ENCODE measurements at regions of chr2 and their contacts with region 1.

Region 1: GRCh38 chr2:85538486-85539360 is at the start of gene MAT2A:
- DNase-seq: peak; percentile 96 to 98 (median 97)
- H3K4me3 ChIP-seq: peak within 1 kb of the TSS; percentile 68
- H3K27ac ChIP-seq: peak within 1 kb of the TSS; percentile 97 to 98
- H3K4me1 ChIP-seq: peaks cover 4% of the 10 kb centered on the region
- H3K27me3 ChIP-seq: no peaks in the 10 kb centered on the region
- CTCF ChIP-seq: peak; percentile 55 to 92 (median 91)
- EP300 ChIP-seq: no peak
- POLR2A ChIP-seq: peak; percentile 99
- total RNA-seq, gene MAT2A: 128 to 766 (median 228) TPM

Region 2: GRCh38 chr2:85420536-85421259 is 118.0 kb before region 1 on chr2:
- intact Hi-C with region 1: loop called in 1 of 4 experiments (anchors 2 kb)
- DNase-seq: peak; percentile 84 to 93 (median 89)
- H3K4me3 ChIP-seq: no peak overlapping the region
- H3K27ac ChIP-seq: peak overlapping the region; percentile 58 to 68
- H3K4me1 ChIP-seq: peaks cover 5% of the 10 kb centered on the region
- H3K27me3 ChIP-seq: no peaks in the 10 kb centered on the region
- CTCF ChIP-seq: peak; percentile 100
- EP300 ChIP-seq: no peak
- POLR2A ChIP-seq: peak; percentile 45

Region 3: GRCh38 chr2:85437488-85438284 is 101.0 kb before region 1 on chr2:
- intact Hi-C with region 1: loop called in 2 of 4 experiments (anchors 5 kb)
- DNase-seq: peak; percentile 87 to 94 (median 90)
- H3K4me3 ChIP-seq: peak overlapping the region; percentile 53
- H3K27ac ChIP-seq: peak overlapping the region; percentile 76 to 91
- H3K4me1 ChIP-seq: peaks cover 17% of the 10 kb centered on the region
- H3K27me3 ChIP-seq: no peaks in the 10 kb centered on the region
- CTCF ChIP-seq: no peak
- EP300 ChIP-seq: peak; percentile 76
- POLR2A ChIP-seq: peak; percentile 92

Region 4: GRCh38 chr2:85501248-85501647 is 37.5 kb before region 1 on chr2:
- intact Hi-C with region 1: no loop called
- DNase-seq: no peak
- H3K4me3 ChIP-seq: no peak overlapping the region
- H3K27ac ChIP-seq: no peak overlapping the region
- H3K4me1 ChIP-seq: peaks cover 2% of the 10 kb centered on the region
- H3K27me3 ChIP-seq: no peaks in the 10 kb centered on the region
- CTCF ChIP-seq: no peak
- EP300 ChIP-seq: no peak
- POLR2A ChIP-seq: no peak

Region 5: DNA sequence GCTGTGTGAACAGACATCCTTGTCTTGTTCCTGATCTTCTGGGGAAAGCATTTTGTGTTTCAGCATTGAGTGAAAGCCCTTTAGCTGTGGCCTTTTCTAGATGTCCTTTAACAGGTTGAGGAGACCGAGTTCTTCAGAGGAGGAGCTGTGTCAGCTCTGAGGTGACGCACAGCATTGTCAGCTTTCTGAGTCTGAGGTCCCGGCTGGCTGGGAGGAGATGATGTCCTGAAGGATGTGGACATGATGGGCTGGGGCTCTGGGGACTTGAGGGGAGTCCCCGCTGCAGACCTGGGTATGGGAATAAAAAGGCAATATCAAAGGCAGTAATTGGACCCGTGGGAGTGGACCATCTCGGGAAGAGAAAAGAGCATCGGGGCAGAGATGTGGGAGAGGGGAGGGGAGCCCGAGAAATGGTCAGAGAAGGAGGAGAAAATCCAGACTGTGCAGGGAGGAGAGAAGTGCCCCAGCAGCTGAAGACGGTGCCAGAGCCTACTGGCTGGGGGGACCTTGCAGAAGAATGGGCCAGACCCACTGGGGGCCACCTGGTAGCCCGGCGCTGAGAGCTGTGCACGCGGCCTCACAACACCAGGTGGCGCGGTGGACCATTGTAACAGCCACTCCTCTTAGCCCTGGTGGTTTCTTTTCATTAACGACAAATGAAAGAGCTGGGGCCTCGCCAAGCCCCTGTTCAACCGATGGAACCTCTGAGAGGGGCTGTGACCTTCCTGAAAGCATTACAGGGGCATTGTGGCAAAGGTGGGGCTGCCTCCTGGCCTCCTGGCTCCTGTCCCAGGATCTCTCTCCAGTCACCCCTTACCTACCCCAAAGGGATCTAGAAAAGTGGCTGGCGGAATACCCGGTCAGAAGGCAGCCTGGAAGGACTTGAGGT is 288.5 kb after region 1 on chr2:
- intact Hi-C with region 1: no loop called
- DNase-seq: peak; percentile 72 to 89 (median 83)
- H3K4me3 ChIP-seq: peak overlapping the region; percentile 21
- H3K27ac ChIP-seq: no peak overlapping the region
- H3K4me1 ChIP-seq: peaks cover 3% of the 10 kb centered on the region
- H3K27me3 ChIP-seq: no peaks in the 10 kb centered on the region
- CTCF ChIP-seq: peak; percentile 82 to 96 (median 95)
- EP300 ChIP-seq: no peak
- POLR2A ChIP-seq: peak; percentile 23

Measured in ovary (tissue), 10 donors.